ENCODE measurements at regions of chr2 and their contacts with region 1.

Region 1: GRCh38 chr2:8544786-8545694 is 136.8 kb upstream of the ID2 start:
- DNase-seq: peak; percentile 95
- H3K4me3 Mint-ChIP-seq: peak overlapping the region; percentile 64
- H3K27ac Mint-ChIP-seq: peak overlapping the region; percentile 99
- H3K4me1 Mint-ChIP-seq: peaks cover 80% of the 10 kb centered on the region
- H3K27me3 Mint-ChIP-seq: no peaks in the 10 kb centered on the region

Region 2: DNA sequence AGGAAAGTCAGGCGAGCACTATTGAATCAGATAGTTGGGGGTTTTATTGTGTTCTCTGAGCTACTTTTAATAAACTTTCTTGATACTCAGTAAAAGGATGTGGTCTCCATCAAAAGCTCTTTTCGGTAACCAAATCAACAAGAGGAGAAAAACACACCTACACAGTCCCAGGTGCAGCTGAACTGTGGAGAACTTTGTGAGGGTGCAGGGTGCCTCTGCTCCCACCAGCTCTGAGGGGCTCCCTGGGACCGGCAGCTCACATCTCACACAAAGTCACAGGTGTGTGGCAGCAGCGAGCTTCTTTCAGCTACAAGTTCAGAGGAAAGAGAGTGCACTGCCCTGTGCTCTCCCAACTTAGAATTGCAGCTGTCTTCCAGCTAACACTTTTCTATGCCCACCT is 977.4 kb before region 1 on chr2:
- intact Hi-C with region 1: loop called (anchors 5 kb)
- DNase-seq: peak; percentile 89
- H3K4me3 Mint-ChIP-seq: peak overlapping the region; percentile 65
- H3K27ac Mint-ChIP-seq: peak overlapping the region; percentile 97
- H3K4me1 Mint-ChIP-seq: peaks cover 58% of the 10 kb centered on the region
- H3K27me3 Mint-ChIP-seq: no peaks in the 10 kb centered on the region

Region 3: GRCh38 chr2:7845332-7845731 is 699.7 kb before region 1 on chr2:
- intact Hi-C with region 1: loop called (anchors 5 kb)
- DNase-seq: peak; percentile 52
- H3K4me3 Mint-ChIP-seq: no peak overlapping the region
- H3K27ac Mint-ChIP-seq: peak overlapping the region; percentile 76
- H3K4me1 Mint-ChIP-seq: peaks cover 42% of the 10 kb centered on the region
- H3K27me3 Mint-ChIP-seq: no peaks in the 10 kb centered on the region

Region 4: GRCh38 chr2:7900593-7900992 is 644.4 kb before region 1 on chr2:
- intact Hi-C with region 1: no loop called
- DNase-seq: peak; percentile 64
- H3K4me3 Mint-ChIP-seq: no peak overlapping the region
- H3K27ac Mint-ChIP-seq: no peak overlapping the region
- H3K4me1 Mint-ChIP-seq: peaks cover 27% of the 10 kb centered on the region
- H3K27me3 Mint-ChIP-seq: no peaks in the 10 kb centered on the region

Region 5: GRCh38 chr2:8234757-8235374 is 310.2 kb before region 1 on chr2:
- intact Hi-C with region 1: loop called (anchors 1 kb)
- DNase-seq: no peak
- H3K4me3 Mint-ChIP-seq: no peak overlapping the region
- H3K27ac Mint-ChIP-seq: no peak overlapping the region
- H3K4me1 Mint-ChIP-seq: peaks cover 22% of the 10 kb centered on the region
- H3K27me3 Mint-ChIP-seq: peaks cover 1% of the 10 kb centered on the region

Region 6: DNA sequence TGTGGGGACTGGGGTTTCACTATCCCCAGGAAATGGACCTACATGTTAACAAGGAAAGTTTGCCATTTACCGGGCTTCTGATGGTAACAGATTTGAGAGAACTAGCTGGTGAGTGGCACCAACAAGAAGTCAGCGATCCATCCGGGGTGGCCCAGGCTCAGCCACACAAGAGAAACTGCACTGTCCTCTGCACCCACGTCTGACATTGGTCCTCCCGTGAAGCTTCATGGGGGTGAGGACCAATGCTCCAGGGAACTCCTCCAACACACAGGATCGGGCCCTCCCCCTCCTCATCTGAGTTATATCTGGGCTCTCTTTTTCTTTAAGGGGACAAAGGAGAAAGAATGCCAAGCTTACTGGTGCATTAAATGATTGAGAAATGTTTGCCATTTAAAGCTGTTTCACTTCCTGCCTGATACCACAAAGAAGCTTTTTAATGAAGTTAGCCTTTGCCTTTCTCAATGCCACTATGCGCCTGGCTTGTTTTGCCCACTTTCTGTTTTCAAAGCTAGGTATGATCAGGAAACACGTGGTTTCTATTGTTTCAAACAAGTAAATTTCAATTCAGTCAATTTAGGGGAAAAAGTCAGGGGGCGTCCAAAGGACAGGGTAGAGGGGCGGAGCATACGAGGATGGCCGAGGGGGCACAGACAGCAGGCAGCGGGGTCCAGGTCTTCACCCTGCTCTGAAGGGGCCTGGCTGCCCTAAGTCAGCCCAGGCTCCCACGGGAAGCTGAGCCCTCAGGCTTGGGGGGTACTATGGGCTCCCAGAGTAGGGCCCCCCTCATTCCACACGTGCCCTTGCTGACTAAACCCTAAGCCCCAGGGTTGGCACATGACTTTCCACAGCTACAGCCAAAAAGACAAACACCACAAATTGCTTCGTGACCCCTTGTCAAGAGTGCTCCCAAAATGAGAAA is 67.2 kb before region 1 on chr2:
- intact Hi-C with region 1: loop called (anchors 1 kb)
- DNase-seq: peak; percentile 76
- H3K4me3 Mint-ChIP-seq: peak overlapping the region; percentile 53
- H3K27ac Mint-ChIP-seq: peak overlapping the region; percentile 84
- H3K4me1 Mint-ChIP-seq: peaks cover 84% of the 10 kb centered on the region
- H3K27me3 Mint-ChIP-seq: no peaks in the 10 kb centered on the region

Region 7: GRCh38 chr2:8606226-8606625 is 61.2 kb after region 1 on chr2:
- intact Hi-C with region 1: loop called (anchors 1 kb)
- DNase-seq: no peak
- H3K4me3 Mint-ChIP-seq: no peak overlapping the region
- H3K27ac Mint-ChIP-seq: no peak overlapping the region
- H3K4me1 Mint-ChIP-seq: peaks cover 22% of the 10 kb centered on the region
- H3K27me3 Mint-ChIP-seq: peaks cover 3% of the 10 kb centered on the region